ENCODE measurements at regions of chr5 and their contacts with region 1.

Region 1: GRCh38 chr5:40688127-40688761 is 8.5 kb downstream of the PTGER4 start:
- DNase-seq: peak in 1 of 2 donors; percentile 86
- H3K4me3 ChIP-seq: no peak overlapping the region
- H3K27ac ChIP-seq: peak overlapping the region; percentile 52
- H3K4me1 ChIP-seq: peaks cover 21% of the 10 kb centered on the region
- H3K27me3 ChIP-seq: no peaks in the 10 kb centered on the region
- CTCF ChIP-seq: peak; percentile 76 to 92 (median 91)
- POLR2A ChIP-seq: no peak

Region 2: GRCh38 chr5:39580702-39581453 is 1107.4 kb before region 1 on chr5:
- intact Hi-C with region 1: loop called (anchors 10 kb)
- DNase-seq: no peak
- H3K4me3 ChIP-seq: no peak overlapping the region
- H3K27ac ChIP-seq: no peak overlapping the region
- H3K4me1 ChIP-seq: peaks cover 8% of the 10 kb centered on the region
- H3K27me3 ChIP-seq: no peaks in the 10 kb centered on the region
- CTCF ChIP-seq: no peak
- POLR2A ChIP-seq: no peak

Region 3: DNA sequence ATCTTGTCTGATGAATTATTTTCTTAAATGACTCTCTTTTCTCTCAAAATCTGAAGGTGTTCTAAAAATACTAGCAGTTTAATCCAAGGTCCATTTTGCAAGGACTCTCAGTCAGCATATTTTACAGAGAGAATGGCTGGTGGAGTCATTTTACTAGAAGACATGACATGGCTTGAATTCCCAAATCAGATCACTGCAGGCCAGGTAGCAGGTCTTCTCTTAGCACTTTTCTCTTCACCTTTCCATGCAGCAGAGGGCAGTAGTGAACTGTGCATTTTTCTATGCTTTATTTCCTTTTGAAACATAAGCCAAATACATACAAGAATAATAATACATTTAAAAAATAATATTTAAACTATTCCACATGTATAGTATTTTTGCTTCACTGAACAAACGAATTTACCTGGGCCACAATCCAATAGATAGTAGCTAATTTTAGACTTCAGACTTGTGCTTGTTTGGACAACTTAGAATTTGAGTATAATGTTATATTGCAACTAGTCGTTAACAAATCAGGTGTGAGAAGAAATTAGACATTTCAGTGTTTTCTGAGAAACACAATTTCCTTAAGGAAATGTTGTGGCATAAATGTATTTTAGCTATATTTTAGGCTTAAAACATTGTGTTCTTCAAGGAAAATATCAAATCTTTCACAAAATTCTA is 974.1 kb before region 1 on chr5:
- intact Hi-C with region 1: loop called (anchors 10 kb)
- DNase-seq: no peak
- H3K4me3 ChIP-seq: no peak overlapping the region
- H3K27ac ChIP-seq: no peak overlapping the region
- H3K4me1 ChIP-seq: peaks cover 7% of the 10 kb centered on the region
- H3K27me3 ChIP-seq: no peaks in the 10 kb centered on the region
- CTCF ChIP-seq: peak in 2 of 3 experiments; percentile 16 to 56
- POLR2A ChIP-seq: no peak

Region 4: DNA sequence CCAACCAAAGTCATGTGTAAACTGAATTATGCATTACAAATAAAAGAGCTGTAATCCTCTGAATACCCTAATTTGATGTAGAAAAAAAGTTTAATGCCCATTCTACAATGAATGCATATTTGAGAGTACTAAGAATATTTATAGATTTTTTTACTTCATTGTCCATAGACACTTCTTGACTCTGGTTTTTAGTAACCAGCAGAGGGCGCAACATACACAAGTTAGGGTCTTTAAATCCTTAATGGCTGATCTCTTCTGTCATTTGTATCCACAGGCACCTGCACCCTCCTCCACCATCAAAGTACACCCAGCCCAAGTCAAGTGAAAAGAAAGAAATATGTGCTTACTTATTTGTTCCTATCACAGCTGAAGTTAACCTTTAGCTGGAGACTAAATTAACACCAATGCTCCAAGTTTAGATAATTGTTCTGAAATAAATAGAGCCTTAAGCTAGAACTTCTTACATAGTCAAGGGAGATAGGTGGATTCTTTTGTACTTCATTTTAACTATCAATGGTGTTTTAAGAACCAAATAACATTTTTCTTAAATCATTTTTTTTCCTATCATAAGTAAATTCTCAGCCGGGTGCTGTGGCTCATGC is 739.3 kb before region 1 on chr5:
- intact Hi-C with region 1: loop called (anchors 5 kb)
- DNase-seq: no peak
- H3K4me3 ChIP-seq: no peak overlapping the region
- H3K27ac ChIP-seq: no peak overlapping the region
- H3K4me1 ChIP-seq: no peaks in the 10 kb centered on the region
- H3K27me3 ChIP-seq: no peaks in the 10 kb centered on the region
- CTCF ChIP-seq: peak; percentile 22 to 61 (median 59)
- POLR2A ChIP-seq: no peak

Measured in vagina (tissue), 2 donors.